HepG2 (cell line): ENCODE measurements at regions of chr5 and their contacts with region 1.

Region 1: DNA sequence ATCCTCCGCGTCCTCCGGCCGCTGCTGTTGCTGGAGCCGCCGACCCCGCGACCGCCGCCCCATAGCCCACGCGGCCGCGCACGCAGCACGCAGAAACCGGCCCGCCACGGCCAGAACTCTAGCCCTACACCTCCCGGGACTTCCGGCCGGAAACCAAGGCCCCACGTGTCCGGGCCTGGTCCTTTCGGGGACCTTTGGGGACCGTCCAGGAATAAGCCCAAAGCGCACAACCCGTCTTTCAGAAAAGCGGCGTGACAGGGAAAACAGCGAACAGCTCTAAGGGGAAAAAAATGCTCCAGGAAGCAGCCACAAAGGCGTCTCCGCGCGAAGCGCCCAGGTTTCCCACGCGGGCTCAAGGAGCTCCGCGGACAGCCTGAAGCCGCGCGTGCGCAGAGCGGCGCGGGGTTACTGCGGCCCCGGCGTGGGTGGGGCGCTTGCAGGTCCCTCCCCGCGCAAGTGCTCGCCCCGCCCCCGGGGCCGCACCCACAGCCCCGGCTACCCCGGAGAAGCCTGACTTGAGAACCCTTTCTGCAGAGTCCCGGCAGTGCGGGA is at the starts of genes NSUN2 and SRD5A1:
- DNase-seq: peak; percentile 81
- ATAC-seq: peak; percentile 88
- H3K4me3 ChIP-seq: peak within 1 kb of the TSS; percentile 90 to 98 (median 94)
- H3K27ac ChIP-seq: peak within 1 kb of the TSS; percentile 97
- H3K4me1 ChIP-seq: peaks cover 63% of the 10 kb centered on the region
- H3K27me3 ChIP-seq: no peaks in the 10 kb centered on the region; a peak in 1 of 5 replicates
- CTCF ChIP-seq: no peak; the same call in 1 of the 2 replicates
- EP300 ChIP-seq: no peak
- POLR2A ChIP-seq: peak; percentile 64 to 73; a peak in 3 of 4 replicates
- RAD21 ChIP-seq: peak; percentile 50
- total RNA-seq, gene NSUN2: 69.1 and 71.4 TPM in 2 replicates
- total RNA-seq, gene SRD5A1: 6.1 and 7.1 TPM in 2 replicates

Region 2: DNA sequence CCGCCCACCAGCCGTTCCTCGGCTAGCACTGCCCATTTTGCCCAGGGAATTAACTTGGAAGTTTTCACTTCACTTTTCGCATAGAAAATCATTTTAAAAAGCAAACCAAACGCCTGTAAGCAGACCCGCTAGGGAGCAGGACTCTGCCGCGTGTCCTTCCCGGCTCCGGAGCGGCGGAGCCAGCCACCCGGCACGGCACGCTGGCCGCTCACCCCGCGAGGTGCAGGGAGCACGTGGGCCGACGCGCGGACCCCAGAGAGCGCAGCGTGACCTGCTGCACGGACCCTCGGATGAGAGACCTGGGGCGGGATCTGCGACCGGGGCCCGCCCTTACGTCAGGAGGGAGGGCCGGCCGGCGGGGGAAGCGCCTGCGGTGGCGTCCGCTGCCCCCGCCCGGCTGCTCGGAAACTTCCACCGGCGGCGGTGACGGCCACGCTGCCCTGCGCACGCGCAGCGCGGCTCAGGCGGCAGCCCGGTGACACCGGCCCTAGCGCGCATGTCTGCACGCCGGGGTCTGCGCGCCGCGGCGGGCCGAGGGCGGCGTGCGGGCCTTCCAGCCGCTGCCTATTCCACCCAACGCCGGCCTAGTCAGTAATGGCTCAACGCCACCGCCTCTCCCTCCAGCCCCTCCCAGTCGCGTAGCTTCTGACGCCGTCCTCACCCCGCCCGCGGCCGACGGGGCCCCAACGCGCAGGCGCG is 79.7 kb after region 1 on chr5:
- CTCF ChIA-PET with region 1: no interaction called
- POLR2A ChIA-PET with region 1: interaction called, 13 read pairs
- in situ Hi-C with region 1: loop called (anchors 5 kb)
- intact Hi-C with region 1: loop called (anchors 1 kb)
- DNase-seq: peak; percentile 92
- ATAC-seq: peak; percentile 86
- H3K4me3 ChIP-seq: peak overlapping the region; percentile 64 to 79 (median 65)
- H3K27ac ChIP-seq: peak overlapping the region; percentile 95
- H3K4me1 ChIP-seq: peaks cover 54% of the 10 kb centered on the region
- H3K27me3 ChIP-seq: no peaks in the 10 kb centered on the region; a peak in 1 of 5 replicates
- CTCF ChIP-seq: peak; percentile 21; the same call in 1 of the 2 replicates
- EP300 ChIP-seq: peak; percentile 3 to 41; a peak in 1 of 4 replicates
- POLR2A ChIP-seq: peak in 1 of 2 experiments; percentile 71; a peak in 2 of 4 replicates
- RAD21 ChIP-seq: peak; percentile 69

Region 3: DNA sequence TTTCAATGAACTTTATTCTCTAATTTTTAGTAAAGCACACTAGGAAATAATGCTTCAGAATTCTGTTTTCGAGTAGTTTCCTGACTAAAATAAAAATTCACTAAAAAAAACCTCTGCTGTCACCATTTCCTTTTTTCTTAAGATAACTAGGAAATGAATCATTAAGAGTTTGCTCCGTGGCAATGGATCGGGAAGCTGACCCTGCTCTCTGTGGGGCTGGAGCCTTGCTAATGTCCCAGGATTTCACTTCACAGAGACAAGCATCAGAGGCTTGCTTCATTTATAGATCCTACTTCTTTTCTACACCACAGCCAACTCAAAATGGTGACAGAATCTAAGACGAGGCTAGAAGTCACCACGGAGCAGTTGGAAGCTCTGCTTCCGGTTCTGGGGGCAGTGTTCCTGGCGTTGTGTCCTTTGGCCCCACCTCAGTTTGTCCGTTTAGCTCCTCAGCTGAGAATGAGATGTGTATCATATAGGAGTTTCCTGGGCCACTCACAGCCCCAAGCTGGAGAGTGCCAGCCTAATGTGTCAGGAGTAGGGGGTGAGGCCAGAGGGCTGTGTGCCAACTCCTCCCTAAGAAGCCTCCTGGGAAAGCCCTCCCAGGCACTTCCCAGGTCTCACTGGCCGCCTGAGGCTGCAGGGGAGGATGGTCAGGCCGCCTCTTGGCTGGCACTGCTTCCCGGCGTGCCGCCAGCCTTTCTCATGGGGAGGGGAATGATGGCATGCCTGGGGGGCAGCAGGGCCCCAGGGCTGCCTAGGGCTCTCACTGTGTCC is 99.8 kb after region 1 on chr5:
- CTCF ChIA-PET with region 1: no interaction called
- POLR2A ChIA-PET with region 1: no interaction called
- in situ Hi-C with region 1: no loop called
- intact Hi-C with region 1: loop called (anchors 5 kb)
- DNase-seq: no peak
- ATAC-seq: no peak
- H3K4me3 ChIP-seq: no peak overlapping the region
- H3K27ac ChIP-seq: peak overlapping the region; percentile 43
- H3K4me1 ChIP-seq: peaks cover 45% of the 10 kb centered on the region
- H3K27me3 ChIP-seq: no peaks in the 10 kb centered on the region
- CTCF ChIP-seq: no peak
- EP300 ChIP-seq: no peak
- POLR2A ChIP-seq: no peak
- RAD21 ChIP-seq: no peak

Region 4: DNA sequence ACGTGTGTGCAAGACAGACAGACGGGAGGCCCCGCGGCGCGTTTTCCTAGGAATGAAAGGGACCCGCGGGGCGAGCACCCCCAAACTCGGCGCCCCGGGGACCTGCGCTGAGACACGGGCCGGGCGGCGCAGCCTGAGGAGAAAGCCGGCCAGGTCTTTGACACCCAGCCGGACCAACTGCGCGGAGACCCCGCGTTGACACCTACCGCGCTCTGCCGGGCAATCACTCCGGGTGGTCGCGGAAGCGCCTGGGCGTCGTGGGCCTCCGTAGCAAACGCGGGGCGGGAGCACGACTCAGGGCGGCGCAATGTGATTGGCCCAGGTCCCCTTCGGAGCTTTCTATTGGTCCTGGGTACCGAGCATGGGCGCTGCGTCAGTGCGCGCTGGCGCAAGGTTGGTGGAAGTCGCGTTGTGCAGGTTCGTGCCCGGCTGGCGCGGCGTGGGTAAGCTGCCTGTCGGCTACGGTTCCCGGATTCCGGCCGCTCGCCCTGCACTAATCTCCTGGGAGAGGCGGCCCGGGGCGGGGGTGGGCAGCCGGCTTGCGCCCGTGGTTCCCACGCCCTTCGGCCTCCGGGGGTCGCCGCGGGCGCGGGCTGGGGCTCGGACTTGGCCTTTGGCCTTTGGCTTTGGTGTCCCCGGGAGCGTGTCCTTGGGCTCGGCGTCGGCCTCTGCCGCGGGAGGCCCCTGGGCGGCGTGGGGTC is 1235.9 kb after region 1 on chr5 and contains the starts of genes FASTKD3 and MTRR:
- CTCF ChIA-PET with region 1: no interaction called
- POLR2A ChIA-PET with region 1: no interaction called
- in situ Hi-C with region 1: no loop called
- intact Hi-C with region 1: loop called (anchors 5 kb)
- DNase-seq: peak; percentile 84
- ATAC-seq: peak; percentile 100
- H3K4me3 ChIP-seq: peak within 1 kb of the TSS; percentile 84 to 89 (median 87)
- H3K27ac ChIP-seq: peak within 1 kb of the TSS; percentile 74
- H3K4me1 ChIP-seq: peaks cover 59% of the 10 kb centered on the region
- H3K27me3 ChIP-seq: no peaks in the 10 kb centered on the region; a peak in 1 of 5 replicates
- CTCF ChIP-seq: no peak; the same call in 1 of the 2 replicates
- EP300 ChIP-seq: no peak
- POLR2A ChIP-seq: peak; percentile 85 to 92
- RAD21 ChIP-seq: peak; percentile 46; the same call in 1 of the 2 replicates
- total RNA-seq, gene FASTKD3: 17.8 and 24.8 TPM in 2 replicates
- total RNA-seq, gene MTRR: 39.2 and 43.1 TPM in 2 replicates